ENCODE measurements at regions of chr1 and their contacts with region 1.

Region 1: GRCh38 chr1:37602750-37603694 is 7.3 kb upstream of the GNL2 start:
- DNase-seq: peak; percentile 43
- ATAC-seq: peak; percentile 86
- H3K4me3 Mint-ChIP-seq: no peak overlapping the region
- H3K27ac Mint-ChIP-seq: no peak overlapping the region
- H3K4me1 Mint-ChIP-seq: no peaks in the 10 kb centered on the region
- H3K27me3 Mint-ChIP-seq: peaks cover 13% of the 10 kb centered on the region
- CTCF ChIP-seq: peak; percentile 71

Region 2: GRCh38 chr1:37423810-37424209 is 179.2 kb before region 1 on chr1:
- CTCF ChIA-PET with region 1: no interaction called
- POLR2A ChIA-PET with region 1: no interaction called
- DNase-seq: no peak
- ATAC-seq: peak; percentile 48; the same call in 1 of the 2 replicates
- H3K4me3 Mint-ChIP-seq: no peak overlapping the region
- H3K27ac Mint-ChIP-seq: no peak overlapping the region
- H3K4me1 Mint-ChIP-seq: peaks cover 2% of the 10 kb centered on the region; the same call in 1 of the 2 replicates
- H3K27me3 Mint-ChIP-seq: no peaks in the 10 kb centered on the region; the same call in 1 of the 2 replicates
- CTCF ChIP-seq: no peak

Region 3: DNA sequence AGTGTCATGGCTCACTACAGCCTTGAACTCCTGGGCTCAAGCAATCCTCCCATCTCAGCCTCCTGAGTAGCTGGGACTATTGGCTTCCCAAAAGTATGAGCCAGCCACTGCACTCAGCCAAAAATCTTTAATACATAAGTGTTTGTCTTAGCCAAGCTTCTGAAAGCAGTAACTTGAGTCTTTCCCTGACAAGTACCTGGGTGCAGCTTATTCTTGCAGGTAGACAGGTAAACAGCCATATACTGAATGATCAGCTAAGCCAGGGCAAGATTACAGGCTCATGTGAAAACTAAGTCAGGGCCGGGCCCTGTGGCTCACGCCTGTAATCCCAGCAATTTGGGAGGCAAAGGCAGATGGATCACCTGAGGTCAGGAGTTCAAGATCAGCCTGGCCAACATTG is 96.3 kb before region 1 on chr1:
- CTCF ChIA-PET with region 1: no interaction called
- POLR2A ChIA-PET with region 1: no interaction called
- DNase-seq: no peak
- ATAC-seq: no peak
- H3K4me3 Mint-ChIP-seq: no peak overlapping the region
- H3K27ac Mint-ChIP-seq: no peak overlapping the region
- H3K4me1 Mint-ChIP-seq: no peaks in the 10 kb centered on the region
- H3K27me3 Mint-ChIP-seq: no peaks in the 10 kb centered on the region
- CTCF ChIP-seq: no peak

Region 4: DNA sequence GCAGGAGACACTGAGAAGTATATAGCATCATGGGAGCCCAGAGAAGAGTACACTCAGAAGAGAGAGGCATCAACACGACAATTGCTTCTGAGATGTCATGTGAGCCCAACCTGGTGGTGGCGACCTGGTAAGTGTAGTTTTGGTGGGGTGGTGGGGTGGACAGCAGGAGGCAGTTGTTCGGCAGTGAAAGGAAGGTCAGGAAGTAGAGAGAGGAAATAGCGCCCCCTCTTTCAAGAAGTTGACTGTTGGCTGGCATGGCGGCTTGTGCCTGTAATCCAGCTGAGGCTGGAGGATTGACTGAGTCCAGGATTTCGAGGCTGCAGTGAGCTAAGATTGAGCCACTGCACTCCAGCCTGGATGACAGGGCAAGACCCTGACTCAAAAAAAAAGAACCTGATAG is 19.1 kb after region 1 on chr1:
- CTCF ChIA-PET with region 1: interaction called, 15 read pairs
- POLR2A ChIA-PET with region 1: no interaction called
- DNase-seq: peak; percentile 38
- ATAC-seq: peak; percentile 86
- H3K4me3 Mint-ChIP-seq: no peak overlapping the region
- H3K27ac Mint-ChIP-seq: no peak overlapping the region
- H3K4me1 Mint-ChIP-seq: no peaks in the 10 kb centered on the region
- H3K27me3 Mint-ChIP-seq: peaks cover 22% of the 10 kb centered on the region
- CTCF ChIP-seq: no peak

Region 5: DNA sequence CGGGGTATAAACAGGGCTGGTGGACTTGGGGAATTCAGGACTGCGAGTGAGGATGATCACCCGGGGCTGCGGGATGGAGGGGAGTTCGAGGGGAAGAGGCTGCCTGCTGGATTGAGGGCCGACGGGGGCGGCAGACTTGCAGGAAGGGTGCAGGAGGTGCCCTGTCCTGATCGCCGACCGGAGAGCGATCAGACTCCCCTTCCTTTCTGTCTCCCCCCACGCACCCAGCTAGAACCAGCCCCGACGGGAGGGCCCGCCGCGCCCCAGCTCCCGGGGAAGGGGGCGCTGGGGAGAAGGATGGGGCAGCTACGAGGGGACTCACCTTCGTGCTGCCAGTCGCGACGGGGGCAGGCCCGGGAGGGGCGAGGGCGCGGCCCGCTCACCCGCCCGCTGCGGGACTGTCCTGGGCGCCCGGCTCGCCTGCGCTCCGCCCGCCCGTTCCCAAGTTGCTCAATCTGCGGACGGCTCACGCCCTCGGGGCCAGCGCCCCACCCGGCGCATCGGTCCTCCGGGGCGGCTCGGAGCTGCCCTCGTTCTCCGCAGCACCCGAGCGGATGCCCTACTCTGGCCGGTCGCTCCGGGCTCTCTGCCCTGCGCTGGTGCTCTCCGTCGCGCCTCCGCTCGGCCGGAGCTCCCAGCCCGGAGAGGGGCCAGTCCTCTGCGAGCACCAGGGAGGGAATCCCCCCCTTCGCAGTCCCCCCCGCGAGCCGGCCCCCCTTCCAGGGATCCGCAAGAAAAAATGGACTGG is 31.4 kb after region 1 on chr1 and contains the start of gene RSPO1:
- CTCF ChIA-PET with region 1: interaction called, 15 read pairs
- POLR2A ChIA-PET with region 1: no interaction called
- DNase-seq: peak; percentile 34
- ATAC-seq: peak; percentile 68
- H3K4me3 Mint-ChIP-seq: peak within 1 kb of the TSS; percentile 69
- H3K27ac Mint-ChIP-seq: no peak within 1 kb of the TSS
- H3K4me1 Mint-ChIP-seq: peaks cover 11% of the 10 kb centered on the region
- H3K27me3 Mint-ChIP-seq: no peaks in the 10 kb centered on the region; the same call in 1 of the 2 replicates
- CTCF ChIP-seq: no peak
- total RNA-seq, gene RSPO1: 0.11 to 0.16 TPM (median 0.13 TPM) in 3 replicates

Region 6: GRCh38 chr1:37655274-37655673 is 52.3 kb after region 1 on chr1:
- CTCF ChIA-PET with region 1: interaction called, 25 read pairs
- POLR2A ChIA-PET with region 1: no interaction called
- DNase-seq: no peak
- ATAC-seq: peak; percentile 60
- H3K4me3 Mint-ChIP-seq: no peak overlapping the region
- H3K27ac Mint-ChIP-seq: no peak overlapping the region
- H3K4me1 Mint-ChIP-seq: peaks cover 3% of the 10 kb centered on the region
- H3K27me3 Mint-ChIP-seq: peaks cover 8% of the 10 kb centered on the region
- CTCF ChIP-seq: no peak

Region 7: GRCh38 chr1:37667023-37667761 is 64.2 kb after region 1 on chr1:
- CTCF ChIA-PET with region 1: interaction called, 13 read pairs
- POLR2A ChIA-PET with region 1: no interaction called
- DNase-seq: no peak
- ATAC-seq: peak; percentile 58
- H3K4me3 Mint-ChIP-seq: no peak overlapping the region
- H3K27ac Mint-ChIP-seq: no peak overlapping the region
- H3K4me1 Mint-ChIP-seq: no peaks in the 10 kb centered on the region
- H3K27me3 Mint-ChIP-seq: peaks cover 2% of the 10 kb centered on the region; the same call in 1 of the 2 replicates
- CTCF ChIP-seq: no peak

Region 8: DNA sequence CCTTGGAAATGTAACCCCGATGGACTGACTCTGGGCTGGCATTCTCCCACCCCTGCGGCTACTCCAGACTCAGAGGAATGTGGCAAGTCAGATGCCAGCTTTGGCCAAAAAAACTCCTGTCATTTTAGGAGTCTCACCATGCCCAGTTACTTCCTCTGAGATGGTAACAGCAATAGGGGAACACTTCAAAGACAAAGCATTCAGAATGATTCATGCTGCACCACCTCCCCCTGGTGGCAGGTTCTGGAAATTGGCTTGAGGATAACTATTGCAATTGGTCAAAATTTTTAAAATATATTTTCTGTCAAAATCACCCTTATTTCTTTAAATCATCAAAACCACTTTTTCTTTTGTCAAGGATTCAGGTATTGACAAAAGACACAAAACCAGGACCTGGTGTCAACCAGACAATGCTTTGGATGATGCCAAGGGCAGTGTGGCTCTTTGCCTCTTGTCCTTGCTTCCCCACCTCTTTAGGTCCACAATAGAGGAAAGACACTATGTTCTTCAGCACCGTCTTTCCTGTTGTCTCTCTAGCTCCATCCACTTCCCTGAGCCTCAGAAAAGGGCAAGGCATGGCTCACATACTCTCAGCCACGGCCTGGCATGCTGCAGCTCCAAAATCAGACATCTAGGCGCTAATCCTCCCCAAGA is 79.4 kb after region 1 on chr1:
- CTCF ChIA-PET with region 1: interaction called, 87 read pairs
- POLR2A ChIA-PET with region 1: no interaction called
- DNase-seq: peak; percentile 83
- ATAC-seq: peak; percentile 74
- H3K4me3 Mint-ChIP-seq: no peak overlapping the region
- H3K27ac Mint-ChIP-seq: no peak overlapping the region
- H3K4me1 Mint-ChIP-seq: no peaks in the 10 kb centered on the region
- H3K27me3 Mint-ChIP-seq: no peaks in the 10 kb centered on the region
- CTCF ChIP-seq: peak; percentile 83

Region 9: DNA sequence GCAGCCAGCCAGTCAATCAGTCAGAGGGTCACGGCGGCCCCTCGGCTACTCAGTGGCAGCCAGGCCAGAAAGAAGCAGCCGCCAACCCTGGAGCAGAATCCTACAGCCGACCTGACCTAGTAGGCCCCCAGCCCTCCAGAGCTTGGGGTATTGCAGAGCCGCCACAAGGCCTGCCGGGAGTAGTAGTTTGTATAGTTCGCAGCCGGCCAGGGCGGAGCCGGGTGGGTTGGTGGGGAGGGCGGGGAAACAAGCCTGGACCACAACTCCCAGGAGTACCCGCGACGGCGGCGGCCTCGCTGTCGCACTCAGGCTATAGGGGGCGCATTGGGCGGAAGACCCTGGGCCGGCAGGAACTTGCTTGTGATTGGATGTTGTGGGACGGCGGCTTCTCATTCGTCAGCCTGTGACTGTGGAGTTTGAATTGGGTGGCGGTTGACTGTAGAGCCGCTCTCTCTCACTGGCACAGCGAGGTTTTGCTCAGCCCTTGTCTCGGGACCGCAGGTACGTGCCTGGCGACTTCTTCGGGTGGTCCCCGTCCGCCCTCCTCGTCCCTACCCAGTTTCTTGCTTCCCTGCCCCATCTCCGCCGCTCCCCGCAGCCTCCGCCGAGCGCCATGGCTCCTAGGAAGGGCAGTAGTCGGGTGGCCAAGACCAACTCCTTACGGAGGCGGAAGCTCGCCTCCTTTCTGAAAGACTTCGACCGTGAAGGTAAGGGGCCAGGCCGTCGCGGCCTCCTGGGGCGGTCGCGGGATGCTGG is 89.2 kb after region 1 on chr1 and contains the start of gene CDCA8:
- CTCF ChIA-PET with region 1: interaction called, 20 read pairs
- POLR2A ChIA-PET with region 1: interaction called, 3 read pairs
- DNase-seq: peak; percentile 99
- ATAC-seq: peak; percentile 91
- H3K4me3 Mint-ChIP-seq: peak within 1 kb of the TSS; percentile 98
- H3K27ac Mint-ChIP-seq: peak within 1 kb of the TSS; percentile 78; the same call in 1 of the 2 replicates
- H3K4me1 Mint-ChIP-seq: peaks cover 16% of the 10 kb centered on the region
- H3K27me3 Mint-ChIP-seq: no peaks in the 10 kb centered on the region; the same call in 1 of the 2 replicates
- CTCF ChIP-seq: peak; percentile 27; the same call in 1 of the 2 replicates
- total RNA-seq, gene CDCA8: 42.1 to 47.7 TPM (median 43.3 TPM) in 3 replicates